ENCODE measurements at regions of chr17 and their contacts with region 1.

Region 1: GRCh38 chr17:79810130-79811010 is 13.5 kb upstream of the CBX8 start:
- DNase-seq: peak; percentile 84
- H3K4me3 Mint-ChIP-seq: peak overlapping the region; percentile 33
- H3K27ac Mint-ChIP-seq: no peak overlapping the region
- H3K4me1 Mint-ChIP-seq: peaks cover 12% of the 10 kb centered on the region
- H3K27me3 Mint-ChIP-seq: peaks cover 46% of the 10 kb centered on the region
- CTCF ChIP-seq: no peak

Region 2: DNA sequence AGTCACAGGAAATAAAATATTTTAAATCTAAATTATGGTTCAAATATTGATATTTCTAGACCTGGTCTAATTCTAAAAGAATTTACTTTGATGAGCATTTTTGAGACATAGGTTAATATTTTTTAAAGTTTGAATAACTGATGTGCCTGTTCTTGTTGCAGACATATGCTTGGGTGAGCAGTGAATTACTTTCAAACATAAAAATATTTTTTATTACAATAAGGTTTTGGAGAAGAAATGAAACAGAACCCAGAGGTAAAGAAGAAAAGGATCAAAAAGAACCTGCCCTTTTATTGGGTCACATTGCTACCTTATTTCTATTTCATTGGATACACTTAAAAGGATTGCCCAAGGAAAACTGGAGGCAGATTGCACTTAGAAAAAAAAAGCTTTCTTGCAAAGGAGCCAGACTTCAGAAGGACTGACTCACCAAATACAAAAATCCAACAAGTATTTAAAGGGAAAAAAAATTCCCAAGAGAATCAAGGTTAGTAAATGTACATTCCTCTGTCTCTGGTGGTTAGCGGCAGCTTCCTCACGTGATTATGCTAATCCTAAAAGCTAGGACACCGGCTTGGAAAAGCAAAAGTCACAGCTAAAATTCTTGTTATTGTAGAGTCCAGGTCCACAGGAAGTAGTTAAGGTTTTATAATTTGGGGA is 61.1 kb before region 1 on chr17:
- CTCF ChIA-PET with region 1: interaction called, 12 read pairs
- POLR2A ChIA-PET with region 1: no interaction called
- intact Hi-C with region 1: loop called (anchors 5 kb)
- DNase-seq: peak; percentile 57
- H3K4me3 Mint-ChIP-seq: no peak overlapping the region
- H3K27ac Mint-ChIP-seq: no peak overlapping the region
- H3K4me1 Mint-ChIP-seq: no peaks in the 10 kb centered on the region
- H3K27me3 Mint-ChIP-seq: no peaks in the 10 kb centered on the region
- CTCF ChIP-seq: no peak

Region 3: DNA sequence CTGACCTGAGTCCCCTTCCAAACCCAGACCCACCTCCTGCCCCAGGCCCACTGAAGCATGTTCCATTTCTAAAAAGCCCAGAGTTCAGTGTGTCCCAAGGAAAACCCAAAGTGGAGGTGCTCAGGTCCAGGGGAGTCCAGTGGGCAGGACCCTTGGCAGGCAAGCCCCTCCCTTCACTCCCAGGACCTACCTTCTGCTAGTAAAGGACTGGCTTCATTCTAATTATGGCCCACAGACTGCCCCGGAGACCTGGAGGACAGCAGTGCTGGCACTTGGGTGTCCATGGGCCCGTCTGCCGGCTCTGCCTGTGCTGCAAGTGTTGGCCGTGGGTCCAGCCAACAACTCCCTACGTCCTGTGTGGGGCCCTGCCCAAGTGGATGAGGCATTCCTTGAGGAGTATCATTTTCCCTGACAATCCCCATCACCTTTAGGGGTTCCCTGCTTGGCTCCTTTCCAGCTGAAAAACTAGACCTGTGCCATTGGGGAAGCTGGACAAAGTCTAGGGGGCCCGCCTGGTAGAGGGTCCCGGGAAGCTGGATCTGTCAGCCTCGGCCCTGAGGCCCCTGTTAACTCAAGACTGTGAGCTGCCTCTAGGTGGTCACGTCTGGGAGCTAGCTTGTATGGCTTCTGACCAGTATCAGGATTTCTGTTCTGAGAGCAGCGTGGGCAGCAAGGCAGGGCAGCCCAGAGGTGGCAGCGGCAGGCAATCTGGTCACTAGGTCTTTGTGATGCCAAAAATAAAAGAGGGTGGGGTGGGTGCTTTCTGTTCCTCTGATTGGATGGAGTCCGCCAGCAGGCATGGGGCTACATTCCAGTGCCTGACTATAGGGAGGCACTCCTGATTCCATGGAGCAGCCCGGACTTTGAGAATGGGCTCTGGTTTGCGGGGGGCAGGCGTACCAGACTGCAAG is 24.2 kb before region 1 on chr17:
- CTCF ChIA-PET with region 1: no interaction called
- POLR2A ChIA-PET with region 1: no interaction called
- intact Hi-C with region 1: no loop called
- DNase-seq: no peak
- H3K4me3 Mint-ChIP-seq: no peak overlapping the region
- H3K27ac Mint-ChIP-seq: no peak overlapping the region
- H3K4me1 Mint-ChIP-seq: no peaks in the 10 kb centered on the region
- H3K27me3 Mint-ChIP-seq: no peaks in the 10 kb centered on the region
- CTCF ChIP-seq: no peak

Region 4: DNA sequence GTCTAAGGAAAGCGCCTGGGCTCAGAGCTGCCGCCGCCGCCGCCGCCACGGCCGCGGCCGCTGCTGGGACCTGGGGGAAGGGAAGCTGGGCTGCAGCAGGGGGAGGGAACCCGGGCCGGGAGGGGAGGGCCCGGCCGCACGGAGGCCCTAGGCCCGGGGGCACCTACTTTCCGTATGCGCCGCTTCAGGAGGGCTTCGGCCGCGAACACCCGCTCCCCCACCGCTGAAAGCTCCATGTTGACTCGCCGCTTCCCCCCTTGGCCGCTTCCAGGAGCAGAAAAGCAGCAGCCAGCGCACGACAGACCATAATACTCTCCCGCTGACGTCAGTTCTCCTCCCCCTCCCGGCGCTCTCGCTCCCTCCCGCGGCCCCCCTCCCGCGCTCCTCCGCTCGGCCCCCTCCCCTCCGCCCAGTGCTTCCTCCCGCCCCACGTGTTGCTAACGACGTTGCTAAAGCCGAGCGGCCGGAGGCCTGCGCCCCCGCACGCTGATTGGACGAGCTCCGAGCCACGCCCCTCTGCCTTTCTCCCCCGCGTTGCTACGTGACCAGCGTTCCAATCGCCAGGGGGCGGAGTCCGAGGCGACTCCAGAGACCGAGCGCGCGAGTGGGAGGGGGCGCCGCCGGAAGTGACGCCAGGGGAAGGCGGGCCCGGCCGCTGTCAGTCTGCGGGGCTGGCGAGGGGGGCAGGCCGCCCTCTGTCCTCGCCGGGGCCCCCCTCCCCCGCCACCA is 13.4 kb before region 1 on chr17 and contains the start of gene CBX8:
- CTCF ChIA-PET with region 1: interaction called, 7 read pairs
- POLR2A ChIA-PET with region 1: interaction called, 12 read pairs
- intact Hi-C with region 1: no loop called
- DNase-seq: peak; percentile 99
- H3K4me3 Mint-ChIP-seq: peak within 1 kb of the TSS; percentile 81
- H3K27ac Mint-ChIP-seq: peak within 1 kb of the TSS; percentile 88
- H3K4me1 Mint-ChIP-seq: peaks cover 15% of the 10 kb centered on the region
- H3K27me3 Mint-ChIP-seq: peaks cover 26% of the 10 kb centered on the region
- CTCF ChIP-seq: no peak
- total RNA-seq, gene CBX8: 9.4 and 10.5 TPM in 2 replicates

Measured in MCF 10A (cell line).